AG04450 (cell line): ENCODE measurements at regions of chr3 and their contacts with region 1.

Region 1: DNA sequence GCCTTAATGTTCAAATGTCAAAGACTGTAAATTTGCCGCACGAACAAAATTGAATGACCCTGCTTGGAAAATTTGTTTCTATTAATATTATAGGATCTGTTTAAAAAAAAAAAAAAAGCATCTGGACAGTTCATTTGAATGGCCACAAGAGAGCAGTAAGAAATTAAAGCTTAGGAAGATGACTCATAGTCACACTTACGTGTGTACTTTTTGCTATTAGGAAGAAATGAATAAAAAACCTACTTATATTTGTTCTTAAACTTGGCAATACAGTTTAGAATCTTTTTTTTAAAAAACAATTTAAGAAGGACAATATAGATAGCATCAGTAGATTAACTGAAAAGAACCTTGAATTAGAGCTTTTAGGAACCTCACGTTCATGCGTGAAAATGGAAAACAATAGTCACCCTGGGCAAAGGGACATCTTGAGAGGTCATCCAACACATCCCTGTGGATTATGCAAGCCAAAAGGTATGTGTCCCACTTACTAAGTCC is 621.8 kb downstream of the MECOM start:
- DNase-seq: no peak
- H3K4me3 ChIP-seq: no peak overlapping the region
- H3K27ac ChIP-seq: no peak overlapping the region
- H3K27me3 ChIP-seq: no peaks in the 10 kb centered on the region
- CTCF ChIP-seq: peak; percentile 66

Region 2: GRCh38 chr3:169026543-169027182 is 15.1 kb before region 1 on chr3:
- CTCF ChIA-PET with region 1: interaction called, 14 read pairs
- POLR2A ChIA-PET with region 1: no interaction called
- DNase-seq: peak; percentile 66
- H3K4me3 ChIP-seq: peak overlapping the region; percentile 29
- H3K27ac ChIP-seq: no peak overlapping the region
- H3K27me3 ChIP-seq: no peaks in the 10 kb centered on the region
- CTCF ChIP-seq: no peak

Region 3: DNA sequence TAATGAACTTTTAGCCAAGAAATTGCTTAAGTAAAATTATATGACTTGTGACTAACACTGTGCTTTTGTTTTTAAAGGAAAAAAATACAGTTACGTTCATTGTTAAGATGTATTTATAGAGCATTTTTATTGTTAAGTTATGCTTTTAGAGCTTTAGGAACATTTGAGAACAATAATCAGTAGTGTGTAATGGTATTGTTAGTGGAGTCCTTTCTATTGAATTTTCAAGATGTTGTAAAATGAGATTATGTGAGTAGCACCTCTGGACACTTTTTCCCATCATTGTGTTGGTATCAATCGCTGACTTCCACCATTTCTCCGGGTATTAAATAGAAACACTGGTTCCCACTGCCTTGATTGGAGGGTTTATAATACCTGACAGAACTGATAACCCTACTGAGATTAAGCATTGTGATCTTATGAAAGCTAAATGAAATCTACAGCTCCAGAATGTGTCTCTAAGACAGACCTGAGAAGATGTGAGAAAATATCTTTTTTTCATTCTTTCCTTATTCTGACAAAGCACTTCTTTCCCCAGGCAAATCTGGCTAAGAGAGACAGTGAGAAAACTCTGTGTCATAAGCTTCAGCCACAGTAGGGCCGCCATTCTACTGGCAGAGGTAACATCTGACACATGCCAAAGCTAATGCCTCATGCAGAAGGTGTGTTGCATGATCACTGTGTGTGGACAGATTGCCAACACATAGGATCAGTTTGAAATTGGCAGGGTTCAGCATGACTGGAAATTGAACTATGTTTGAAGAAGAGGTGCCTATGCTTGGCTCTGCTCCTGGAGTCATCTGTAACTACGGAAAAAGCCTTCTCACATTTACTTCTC is 11.0 kb after region 1 on chr3:
- CTCF ChIA-PET with region 1: interaction called, 32 read pairs
- POLR2A ChIA-PET with region 1: no interaction called
- DNase-seq: no peak
- H3K4me3 ChIP-seq: no peak overlapping the region
- H3K27ac ChIP-seq: no peak overlapping the region
- H3K27me3 ChIP-seq: no peaks in the 10 kb centered on the region
- CTCF ChIP-seq: no peak

Region 4: GRCh38 chr3:169213956-169214355 is 172.2 kb after region 1 on chr3:
- CTCF ChIA-PET with region 1: no interaction called
- POLR2A ChIA-PET with region 1: no interaction called
- DNase-seq: no peak
- H3K4me3 ChIP-seq: no peak overlapping the region
- H3K27ac ChIP-seq: no peak overlapping the region
- H3K27me3 ChIP-seq: no peaks in the 10 kb centered on the region
- CTCF ChIP-seq: no peak

Region 5: DNA sequence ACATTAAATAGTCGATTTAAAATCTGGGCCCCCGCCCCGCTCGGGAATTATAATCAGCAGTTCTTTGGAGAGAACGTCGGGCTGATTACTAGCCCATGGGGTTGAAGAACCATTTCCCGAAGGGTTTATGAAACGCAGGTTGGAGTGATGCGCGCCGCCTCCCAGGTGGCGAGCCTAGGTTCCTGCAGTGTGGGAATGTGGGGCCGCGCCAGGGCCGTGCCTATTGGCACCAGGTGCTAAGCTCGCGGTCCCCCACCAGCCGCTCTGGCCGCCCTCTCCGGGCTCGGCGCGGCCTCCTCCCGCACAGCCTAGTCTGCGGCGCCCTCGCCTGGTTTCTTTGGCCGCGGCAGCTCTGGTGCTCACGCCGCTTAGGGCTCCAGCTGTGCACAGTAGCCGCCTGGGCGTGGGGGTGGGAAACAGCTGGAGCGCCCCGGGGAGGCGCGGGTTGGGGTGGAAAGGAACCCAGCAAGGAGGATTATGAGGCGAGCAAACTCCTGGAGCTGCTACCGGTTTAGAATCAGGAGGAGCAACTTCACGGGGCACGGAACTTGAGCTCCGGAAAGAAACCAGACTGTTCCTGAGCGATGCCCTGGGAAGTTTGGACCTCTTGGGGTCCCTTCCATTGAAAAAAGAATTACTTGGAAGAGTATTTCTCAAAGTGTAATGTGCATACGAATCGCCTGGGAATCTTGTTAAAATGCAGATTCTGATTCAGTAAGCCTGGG is 627.4 kb after region 1 on chr3:
- CTCF ChIA-PET with region 1: interaction called, 42 read pairs
- POLR2A ChIA-PET with region 1: no interaction called
- DNase-seq: no peak
- H3K4me3 ChIP-seq: peak overlapping the region; percentile 55
- H3K27ac ChIP-seq: no peak overlapping the region
- H3K27me3 ChIP-seq: peaks cover 58% of the 10 kb centered on the region
- CTCF ChIP-seq: peak; percentile 74

Region 6: DNA sequence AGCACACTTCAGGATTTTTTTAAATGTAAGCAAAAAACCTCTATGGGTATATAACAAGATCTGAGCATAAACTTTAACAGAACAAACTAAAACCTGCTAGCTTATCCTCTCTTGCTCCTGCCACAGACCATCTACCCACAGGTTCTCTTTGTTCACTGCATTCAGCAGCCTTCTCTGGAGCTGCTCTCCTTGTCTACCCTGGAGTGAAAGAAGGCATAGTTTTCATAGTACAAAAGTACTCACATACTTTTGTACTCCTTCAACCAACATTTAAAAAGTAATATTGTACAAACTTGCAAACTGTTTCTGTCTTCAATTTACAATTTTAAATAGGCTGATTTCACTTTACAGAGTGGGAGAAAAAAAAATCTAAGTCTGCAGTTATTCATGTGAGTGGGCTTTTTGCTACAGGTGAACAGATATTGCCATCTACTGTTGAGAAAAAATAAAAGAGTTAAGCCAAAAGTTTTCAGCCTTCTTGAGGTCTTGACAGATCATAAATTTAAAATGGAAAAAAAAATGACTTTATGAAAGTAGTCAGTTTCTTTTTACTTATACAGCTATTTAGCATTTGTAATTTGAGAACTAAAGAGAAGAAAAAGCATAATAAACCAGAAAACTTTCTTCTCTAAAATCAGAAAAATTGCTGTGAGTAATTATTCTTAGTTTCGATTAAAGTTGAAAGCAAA is 702.8 kb after region 1 on chr3:
- CTCF ChIA-PET with region 1: interaction called, 10 read pairs
- POLR2A ChIA-PET with region 1: no interaction called
- DNase-seq: no peak
- H3K4me3 ChIP-seq: no peak overlapping the region
- H3K27ac ChIP-seq: no peak overlapping the region
- H3K27me3 ChIP-seq: peaks cover 6% of the 10 kb centered on the region
- CTCF ChIP-seq: peak; percentile 47